IMR-90 (cell line): ENCODE measurements at regions of chr11 and their contacts with region 1.

Region 1: GRCh38 chr11:72102946-72103753 is at the start of gene LAMTOR1:
- DNase-seq: peak; percentile 99
- ATAC-seq: peak; percentile 95
- H3K4me3 ChIP-seq: peak within 1 kb of the TSS; percentile 75
- H3K27ac ChIP-seq: peak within 1 kb of the TSS; percentile 94
- H3K4me1 ChIP-seq: peaks cover 10% of the 10 kb centered on the region
- H3K27me3 ChIP-seq: no peaks in the 10 kb centered on the region
- CTCF ChIP-seq: peak; percentile 48
- POLR2A ChIP-seq: peak; percentile 93
- RAD21 ChIP-seq: peak; percentile 37
- total RNA-seq, gene LAMTOR1: 118 and 137 TPM in 2 replicates

Region 2: GRCh38 chr11:72091005-72091691 is 12.0 kb before region 1 on chr11:
- CTCF ChIA-PET with region 1: interaction called, 10 read pairs
- POLR2A ChIA-PET with region 1: no interaction called
- dilution Hi-C with region 1: no loop called
- in situ Hi-C with region 1: no loop called
- intact Hi-C with region 1: no loop called
- DNase-seq: peak; percentile 54
- ATAC-seq: peak; percentile 95
- H3K4me3 ChIP-seq: no peak overlapping the region
- H3K27ac ChIP-seq: no peak overlapping the region
- H3K4me1 ChIP-seq: no peaks in the 10 kb centered on the region
- H3K27me3 ChIP-seq: no peaks in the 10 kb centered on the region
- CTCF ChIP-seq: peak; percentile 91
- POLR2A ChIP-seq: no peak
- RAD21 ChIP-seq: peak; percentile 79

Region 3: GRCh38 chr11:72189461-72190275 is 86.5 kb after region 1 on chr11:
- CTCF ChIA-PET with region 1: no interaction called
- POLR2A ChIA-PET with region 1: interaction called, 10 read pairs
- dilution Hi-C with region 1: no loop called
- in situ Hi-C with region 1: no loop called
- intact Hi-C with region 1: loop called (anchors 5 kb)
- DNase-seq: no peak
- ATAC-seq: no peak; the same call in 1 of the 2 replicates
- H3K4me3 ChIP-seq: no peak overlapping the region
- H3K27ac ChIP-seq: no peak overlapping the region
- H3K4me1 ChIP-seq: no peaks in the 10 kb centered on the region
- H3K27me3 ChIP-seq: peaks cover 3% of the 10 kb centered on the region; the same call in 1 of the 2 replicates
- CTCF ChIP-seq: no peak
- POLR2A ChIP-seq: no peak
- RAD21 ChIP-seq: no peak

Region 4: GRCh38 chr11:72222907-72223614 is 119.9 kb after region 1 on chr11:
- CTCF ChIA-PET with region 1: no interaction called
- POLR2A ChIA-PET with region 1: no interaction called
- dilution Hi-C with region 1: no loop called
- in situ Hi-C with region 1: no loop called
- intact Hi-C with region 1: loop called (anchors 2 kb)
- DNase-seq: peak; percentile 88
- ATAC-seq: peak; percentile 76
- H3K4me3 ChIP-seq: peak overlapping the region; percentile 98
- H3K27ac ChIP-seq: peak overlapping the region; percentile 80
- H3K4me1 ChIP-seq: peaks cover 6% of the 10 kb centered on the region; the same call in 1 of the 2 replicates
- H3K27me3 ChIP-seq: peaks cover 11% of the 10 kb centered on the region
- CTCF ChIP-seq: peak; percentile 39; the same call in 1 of the 2 replicates
- POLR2A ChIP-seq: no peak; the same call in 1 of the 2 replicates
- RAD21 ChIP-seq: no peak